Transverse colon (tissue), 4 donors: ENCODE measurements at regions of chr2 and their contacts with region 1.

Region 1: DNA sequence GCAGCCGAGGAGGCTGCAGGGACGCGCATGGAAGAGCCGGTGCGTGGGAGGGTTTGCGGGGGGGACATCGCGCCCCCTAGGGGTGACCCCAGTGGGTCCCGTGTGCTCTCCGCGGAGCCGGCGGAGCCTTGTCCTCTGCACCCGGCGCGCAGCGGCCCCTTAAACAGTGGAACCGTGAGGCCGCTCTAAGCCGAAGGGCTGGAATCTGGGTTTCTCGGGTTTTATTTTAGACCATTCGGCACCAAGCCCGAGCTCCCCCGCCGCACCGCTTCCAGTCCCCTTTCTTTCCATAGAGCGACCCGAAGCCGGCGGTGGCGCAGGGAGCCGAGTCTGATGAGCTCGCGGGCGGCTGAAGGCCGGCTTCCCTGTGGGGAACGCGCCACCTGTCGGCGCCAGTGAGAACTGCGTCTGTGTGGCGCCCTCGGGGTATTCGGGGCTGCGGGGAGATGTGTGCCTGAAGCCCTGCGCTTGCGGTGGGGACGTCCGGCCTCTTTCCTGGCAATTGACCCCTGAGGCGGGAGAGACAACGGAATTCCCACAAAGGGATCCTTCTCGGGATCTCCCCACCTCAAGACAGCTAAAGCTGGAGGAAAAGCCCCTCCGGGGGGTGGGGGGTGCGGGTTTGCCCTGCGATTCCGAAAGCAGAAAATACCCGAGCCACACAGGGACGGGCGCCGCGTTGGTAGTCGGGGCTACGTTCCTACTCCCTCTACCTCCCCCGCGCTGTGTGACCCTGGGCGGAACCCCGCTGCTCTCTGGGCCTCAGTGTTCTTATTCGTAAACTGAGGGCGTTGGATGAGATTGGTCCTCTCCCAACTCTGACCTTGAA is 8.2 kb upstream of the EN1 start:
- DNase-seq: peak; percentile 81
- H3K4me3 ChIP-seq: peak overlapping the region in 2 of 4 donors; percentile 14 to 37
- H3K27ac ChIP-seq: no peak overlapping the region
- H3K4me1 ChIP-seq: peaks cover 4 to 22% (median 10%) of the 10 kb centered on the region in 4 donors
- H3K27me3 ChIP-seq: peaks cover 100% of the 10 kb centered on the region
- CTCF ChIP-seq: peak; percentile 89 to 99 (median 98)
- EP300 ChIP-seq: no peak
- POLR2A ChIP-seq: no peak

Region 2: GRCh38 chr2:118032169-118033013 is 823.3 kb before region 1 on chr2:
- in situ Hi-C with region 1: loop called (anchors 10 to 25 kb)
- intact Hi-C with region 1: no loop called
- DNase-seq: peak; percentile 34
- H3K4me3 ChIP-seq: no peak overlapping the region
- H3K27ac ChIP-seq: no peak overlapping the region
- H3K4me1 ChIP-seq: no peaks in the 10 kb centered on the region
- H3K27me3 ChIP-seq: peaks cover 11% of the 10 kb centered on the region
- CTCF ChIP-seq: peak; percentile 60 to 78 (median 75)
- EP300 ChIP-seq: no peak
- POLR2A ChIP-seq: no peak

Region 3: DNA sequence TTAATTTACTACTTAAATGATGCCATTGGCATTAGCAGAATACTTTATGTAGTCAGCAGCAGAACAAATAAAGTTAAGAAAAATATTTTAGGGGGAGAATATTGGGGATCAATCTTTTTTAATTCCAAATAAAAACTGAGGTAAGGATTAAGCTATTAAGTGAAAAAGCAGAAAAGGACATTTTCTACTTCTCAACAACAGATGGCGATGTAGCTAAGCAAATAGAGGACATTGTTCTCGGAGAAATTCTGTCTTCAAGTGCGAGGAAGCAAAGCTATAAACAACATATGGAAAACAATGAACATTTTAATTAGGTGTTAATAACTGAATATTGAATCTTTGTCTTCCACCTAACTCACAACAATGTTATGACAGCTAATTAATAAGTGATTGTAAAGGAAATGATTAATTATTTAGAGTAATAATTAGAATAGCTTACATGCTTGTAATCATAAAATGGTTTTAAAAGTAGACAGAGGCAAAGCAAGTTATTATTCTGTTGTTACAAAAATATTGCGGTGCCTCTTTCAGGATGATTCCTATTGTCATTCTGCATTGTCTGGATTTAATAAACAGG is 808.9 kb before region 1 on chr2:
- in situ Hi-C with region 1: loop called in 3 of 4 experiments (anchors 25 kb)
- intact Hi-C with region 1: loop called (anchors 5 kb)
- DNase-seq: no peak
- H3K4me3 ChIP-seq: no peak overlapping the region
- H3K27ac ChIP-seq: no peak overlapping the region
- H3K4me1 ChIP-seq: peaks cover 0 to 4% (median 0%) of the 10 kb centered on the region in 4 donors
- H3K27me3 ChIP-seq: peaks cover 48% of the 10 kb centered on the region
- CTCF ChIP-seq: peak; percentile 38 to 54 (median 50)
- EP300 ChIP-seq: no peak
- POLR2A ChIP-seq: no peak

Region 4: DNA sequence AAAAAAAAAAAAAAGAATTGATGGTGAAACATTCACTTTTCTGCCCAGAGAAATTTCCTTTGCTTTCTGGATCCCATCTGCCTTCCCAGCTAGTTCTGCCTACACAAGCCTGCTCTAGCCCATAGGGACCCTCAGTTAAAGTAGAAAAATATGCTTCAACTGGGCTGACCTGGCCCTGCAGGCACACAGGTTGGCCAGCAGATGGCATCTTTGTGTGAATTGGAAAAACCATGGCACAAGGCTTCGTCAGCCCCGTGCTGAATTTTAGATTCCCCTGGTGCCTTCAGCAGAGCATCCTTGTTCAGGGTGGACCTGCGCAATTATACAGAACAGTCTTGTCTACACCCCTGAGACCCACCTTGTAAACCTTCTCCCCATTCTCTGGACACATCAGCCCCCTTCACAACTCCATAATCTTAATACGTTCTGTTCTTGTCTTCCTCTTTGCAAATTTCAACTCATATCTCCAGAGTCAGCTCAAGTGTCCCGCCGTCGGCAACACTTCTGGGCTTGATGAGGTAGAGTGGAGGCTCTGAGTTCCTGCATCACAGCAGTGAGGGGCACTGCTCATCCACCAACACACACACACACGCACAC is 652.9 kb before region 1 on chr2:
- in situ Hi-C with region 1: loop called in 1 of 4 experiments (anchors 25 kb)
- intact Hi-C with region 1: loop called (anchors 5 kb)
- DNase-seq: peak; percentile 34
- H3K4me3 ChIP-seq: no peak overlapping the region
- H3K27ac ChIP-seq: no peak overlapping the region
- H3K4me1 ChIP-seq: no peaks in the 10 kb centered on the region
- H3K27me3 ChIP-seq: peaks cover 19% of the 10 kb centered on the region
- CTCF ChIP-seq: peak; percentile 58 to 79 (median 73)
- EP300 ChIP-seq: no peak
- POLR2A ChIP-seq: no peak

Region 5: GRCh38 chr2:118221666-118222594 is 633.7 kb before region 1 on chr2:
- in situ Hi-C with region 1: loop called in 3 of 4 experiments (anchors 10 to 25 kb)
- intact Hi-C with region 1: loop called (anchors 1 kb)
- DNase-seq: no peak
- H3K4me3 ChIP-seq: no peak overlapping the region
- H3K27ac ChIP-seq: no peak overlapping the region
- H3K4me1 ChIP-seq: peaks cover 0 to 17% (median 10%) of the 10 kb centered on the region in 4 donors
- H3K27me3 ChIP-seq: peaks cover 100% of the 10 kb centered on the region
- CTCF ChIP-seq: peak; percentile 58 to 71 (median 62)
- EP300 ChIP-seq: no peak
- POLR2A ChIP-seq: no peak

Region 6: DNA sequence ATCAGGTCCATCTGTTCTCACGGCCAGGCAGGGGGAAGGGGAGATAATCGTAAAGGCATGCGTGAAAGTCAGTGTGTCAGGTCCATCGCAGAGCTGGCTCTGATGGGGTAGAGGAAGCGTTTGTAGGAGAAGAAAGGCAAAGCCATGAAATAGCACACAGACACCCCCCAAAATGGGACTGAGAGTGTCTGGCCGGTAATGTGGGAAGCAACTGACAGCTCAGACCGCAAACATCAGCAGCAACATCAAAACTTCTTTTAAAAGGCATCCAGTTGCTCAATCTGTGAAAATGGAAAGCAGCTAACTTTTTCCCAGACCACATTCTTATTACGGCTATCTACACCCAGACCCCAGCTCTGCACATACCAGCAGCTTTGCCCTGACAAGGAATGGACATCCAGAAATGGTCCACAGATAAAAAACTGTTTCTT is 240.8 kb before region 1 on chr2:
- in situ Hi-C with region 1: no loop called
- intact Hi-C with region 1: no loop called
- DNase-seq: no peak
- H3K4me3 ChIP-seq: no peak overlapping the region
- H3K27ac ChIP-seq: no peak overlapping the region
- H3K4me1 ChIP-seq: no peaks in the 10 kb centered on the region
- H3K27me3 ChIP-seq: no peaks in the 10 kb centered on the region
- CTCF ChIP-seq: no peak
- EP300 ChIP-seq: no peak
- POLR2A ChIP-seq: no peak